ENCODE measurements at regions of chr5 and their contacts with region 1.

Region 1: DNA sequence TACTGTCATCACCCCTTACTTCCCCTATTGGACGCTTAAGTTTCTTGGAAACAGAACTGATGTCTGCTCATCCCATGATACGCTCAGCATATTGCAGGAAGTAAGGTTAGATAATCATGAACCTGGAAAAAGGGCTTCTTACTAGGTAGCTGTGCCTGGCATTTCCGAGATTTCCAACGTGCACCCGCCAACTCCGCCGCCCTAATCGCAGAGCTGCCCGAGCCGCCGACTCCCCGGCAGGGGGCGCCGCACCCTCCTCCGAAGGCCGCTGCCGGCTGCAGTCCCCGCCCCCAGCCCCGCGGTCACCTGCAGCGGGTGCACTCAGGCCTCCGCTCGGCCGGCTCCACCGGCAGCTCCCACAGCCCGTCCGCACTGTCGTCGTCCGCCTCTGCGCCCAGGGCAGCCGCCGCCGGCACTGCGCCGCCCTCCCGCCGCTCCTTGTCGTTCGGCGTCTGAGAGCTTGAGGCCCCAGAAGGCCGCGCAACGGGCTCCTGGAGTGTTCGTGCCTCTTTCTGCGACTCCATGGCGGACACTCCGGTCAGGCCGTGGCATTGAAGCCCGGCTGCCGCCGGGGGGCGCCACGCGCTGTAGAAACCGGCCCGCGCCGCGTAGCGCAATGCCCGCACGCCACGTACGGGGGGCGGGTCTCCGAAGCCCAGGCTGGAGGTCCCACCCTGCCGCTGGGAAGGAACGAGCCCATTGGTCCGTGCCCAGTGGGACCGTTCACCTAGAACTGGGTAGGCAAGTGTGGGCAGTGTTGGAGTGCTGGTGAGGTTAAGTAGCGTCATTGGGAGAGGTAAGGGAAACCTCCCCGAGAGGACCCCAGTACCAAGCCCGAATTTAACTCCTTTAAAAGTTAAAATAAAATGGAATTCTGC is at the start of gene DTWD2:
- DNase-seq: peak; percentile 92 to 96
- ATAC-seq: peak; percentile 90 to 97 (median 91)
- H3K4me3 ChIP-seq: peak within 1 kb of the TSS; percentile 43
- H3K4me3 Mint-ChIP-seq: peak within 1 kb of the TSS; percentile 82
- H3K27ac ChIP-seq: peak within 1 kb of the TSS; percentile 70
- H3K27ac Mint-ChIP-seq: peak within 1 kb of the TSS; percentile 48 to 82
- H3K4me1 ChIP-seq: peaks cover 5% of the 10 kb centered on the region
- H3K4me1 Mint-ChIP-seq: peaks cover 11 to 16% of the 10 kb centered on the region in 2 donors
- H3K27me3 ChIP-seq: no peaks in the 10 kb centered on the region
- H3K27me3 Mint-ChIP-seq: no peaks in the 10 kb centered on the region
- CTCF ChIP-seq: peak; percentile 99
- total RNA-seq, gene DTWD2: 3.7 to 6.0 (median 4.1) TPM

Region 2: GRCh38 chr5:118253225-118254061 is 734.8 kb before region 1 on chr5:
- intact Hi-C with region 1: no loop called
- DNase-seq: no peak
- ATAC-seq: no peak
- H3K4me3 ChIP-seq: no peak overlapping the region
- H3K4me3 Mint-ChIP-seq: no peak overlapping the region
- H3K27ac ChIP-seq: no peak overlapping the region
- H3K27ac Mint-ChIP-seq: no peak overlapping the region
- H3K4me1 ChIP-seq: no peaks in the 10 kb centered on the region
- H3K4me1 Mint-ChIP-seq: no peaks in the 10 kb centered on the region
- H3K27me3 ChIP-seq: no peaks in the 10 kb centered on the region
- H3K27me3 Mint-ChIP-seq: no peaks in the 10 kb centered on the region
- CTCF ChIP-seq: no peak

Region 3: GRCh38 chr5:118968925-118969375 is 19.3 kb before region 1 on chr5:
- intact Hi-C with region 1: no loop called
- DNase-seq: no peak
- ATAC-seq: no peak
- H3K4me3 ChIP-seq: no peak overlapping the region
- H3K4me3 Mint-ChIP-seq: no peak overlapping the region
- H3K27ac ChIP-seq: no peak overlapping the region
- H3K27ac Mint-ChIP-seq: no peak overlapping the region
- H3K4me1 ChIP-seq: peaks cover 3% of the 10 kb centered on the region
- H3K4me1 Mint-ChIP-seq: peaks cover 0 to 5% of the 10 kb centered on the region in 2 donors
- H3K27me3 ChIP-seq: no peaks in the 10 kb centered on the region
- H3K27me3 Mint-ChIP-seq: no peaks in the 10 kb centered on the region
- CTCF ChIP-seq: no peak

Region 4: DNA sequence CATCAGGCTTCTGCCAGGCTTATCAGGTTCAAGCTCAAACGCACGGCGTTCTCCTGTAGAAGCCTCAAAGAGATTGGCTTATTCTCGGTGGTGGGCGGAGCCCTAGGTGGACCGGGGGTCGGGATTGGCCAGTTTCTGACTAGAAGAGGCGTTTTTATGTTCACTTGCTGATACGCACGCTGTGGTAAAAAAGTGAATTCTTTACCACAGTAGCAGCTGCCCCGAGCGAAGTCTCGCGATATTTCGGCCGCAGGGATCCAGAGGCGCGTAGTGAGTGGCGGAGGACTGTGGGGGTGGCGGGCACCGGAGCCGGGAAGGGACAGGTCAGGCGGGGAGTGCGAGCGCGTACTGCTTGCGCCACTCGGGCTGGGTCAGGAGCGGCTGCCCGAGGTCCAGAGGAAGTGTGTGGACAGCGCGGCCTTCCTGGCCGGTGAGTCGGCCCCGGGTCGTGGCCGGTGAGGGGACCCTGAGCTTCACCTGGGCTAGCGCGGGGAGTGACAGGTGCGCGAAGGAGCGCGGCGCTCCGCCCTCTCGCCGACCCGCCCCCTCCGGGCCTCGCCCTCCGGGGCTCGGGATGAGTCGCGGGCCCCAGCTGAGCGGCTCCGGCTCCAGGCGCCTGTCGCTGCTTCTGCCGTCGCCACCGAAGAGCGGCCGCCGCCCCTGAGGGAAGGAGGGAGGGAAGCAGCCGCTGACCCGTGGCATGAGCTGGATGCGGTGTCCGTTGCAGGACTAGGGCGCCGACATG is 82.8 kb after region 1 on chr5 and contains the start of gene DMXL1:
- intact Hi-C with region 1: loop called (anchors 1 kb)
- DNase-seq: peak; percentile 96 to 99
- ATAC-seq: peak; percentile 87 to 96 (median 89)
- H3K4me3 ChIP-seq: peak within 1 kb of the TSS; percentile 79
- H3K4me3 Mint-ChIP-seq: peak within 1 kb of the TSS; percentile 100
- H3K27ac ChIP-seq: peak within 1 kb of the TSS; percentile 93
- H3K27ac Mint-ChIP-seq: peak within 1 kb of the TSS; percentile 98 to 100
- H3K4me1 ChIP-seq: peaks cover 19% of the 10 kb centered on the region
- H3K4me1 Mint-ChIP-seq: peaks cover 39 to 41% of the 10 kb centered on the region in 2 donors
- H3K27me3 ChIP-seq: no peaks in the 10 kb centered on the region
- H3K27me3 Mint-ChIP-seq: no peaks in the 10 kb centered on the region
- CTCF ChIP-seq: no peak
- total RNA-seq, gene DMXL1: 36.7 to 43.0 (median 39.9) TPM

Region 5: DNA sequence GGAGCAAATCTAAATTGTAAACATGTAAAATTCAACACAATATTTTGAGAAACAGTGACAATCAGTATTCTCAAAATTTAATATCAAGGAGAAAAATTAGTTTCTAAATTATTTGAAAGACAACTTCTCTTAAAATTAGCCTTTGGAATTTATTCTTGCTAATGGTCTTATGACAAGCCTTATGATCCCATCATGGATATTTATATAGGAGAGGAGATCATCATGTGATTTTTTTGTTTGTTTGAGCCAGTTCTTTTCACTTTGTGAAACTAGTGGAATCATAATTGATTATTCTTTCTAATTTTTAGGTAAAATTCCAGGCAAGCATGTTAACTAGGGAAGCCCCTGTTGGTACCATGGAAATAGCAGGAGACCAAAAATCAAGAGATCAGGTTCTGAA is 107.4 kb after region 1 on chr5:
- intact Hi-C with region 1: no loop called
- DNase-seq: no peak
- ATAC-seq: no peak
- H3K4me3 ChIP-seq: no peak overlapping the region
- H3K4me3 Mint-ChIP-seq: no peak overlapping the region
- H3K27ac ChIP-seq: no peak overlapping the region
- H3K27ac Mint-ChIP-seq: no peak overlapping the region
- H3K4me1 ChIP-seq: no peaks in the 10 kb centered on the region
- H3K4me1 Mint-ChIP-seq: peaks cover 40 to 41% of the 10 kb centered on the region in 2 donors
- H3K27me3 ChIP-seq: no peaks in the 10 kb centered on the region
- H3K27me3 Mint-ChIP-seq: no peaks in the 10 kb centered on the region
- CTCF ChIP-seq: no peak

Region 6: GRCh38 chr5:119255571-119256356 is 267.5 kb after region 1 on chr5:
- intact Hi-C with region 1: loop called (anchors 1 kb)
- DNase-seq: peak in 1 of 2 donors; percentile 39
- ATAC-seq: peak in 2 of 3 donors; percentile 76 to 79
- H3K4me3 ChIP-seq: no peak overlapping the region
- H3K4me3 Mint-ChIP-seq: no peak overlapping the region
- H3K27ac ChIP-seq: no peak overlapping the region
- H3K27ac Mint-ChIP-seq: no peak overlapping the region
- H3K4me1 ChIP-seq: no peaks in the 10 kb centered on the region
- H3K4me1 Mint-ChIP-seq: peaks cover 0 to 5% of the 10 kb centered on the region in 2 donors
- H3K27me3 ChIP-seq: no peaks in the 10 kb centered on the region
- H3K27me3 Mint-ChIP-seq: peaks cover 0 to 4% of the 10 kb centered on the region in 2 donors
- CTCF ChIP-seq: no peak

Region 7: GRCh38 chr5:119411935-119412602 is 423.8 kb after region 1 on chr5:
- intact Hi-C with region 1: loop called (anchors 1 kb)
- DNase-seq: peak; percentile 21 to 88
- ATAC-seq: peak; percentile 84 to 98 (median 96)
- H3K4me3 ChIP-seq: peak overlapping the region; percentile 38
- H3K4me3 Mint-ChIP-seq: peak overlapping the region; percentile 94
- H3K27ac ChIP-seq: no peak overlapping the region
- H3K27ac Mint-ChIP-seq: peak overlapping the region in 1 of 2 donors; percentile 85
- H3K4me1 ChIP-seq: peaks cover 8% of the 10 kb centered on the region
- H3K4me1 Mint-ChIP-seq: peaks cover 9 to 10% of the 10 kb centered on the region in 2 donors
- H3K27me3 ChIP-seq: no peaks in the 10 kb centered on the region
- H3K27me3 Mint-ChIP-seq: peaks cover 0 to 4% of the 10 kb centered on the region in 2 donors
- CTCF ChIP-seq: peak; percentile 94

Region 8: DNA sequence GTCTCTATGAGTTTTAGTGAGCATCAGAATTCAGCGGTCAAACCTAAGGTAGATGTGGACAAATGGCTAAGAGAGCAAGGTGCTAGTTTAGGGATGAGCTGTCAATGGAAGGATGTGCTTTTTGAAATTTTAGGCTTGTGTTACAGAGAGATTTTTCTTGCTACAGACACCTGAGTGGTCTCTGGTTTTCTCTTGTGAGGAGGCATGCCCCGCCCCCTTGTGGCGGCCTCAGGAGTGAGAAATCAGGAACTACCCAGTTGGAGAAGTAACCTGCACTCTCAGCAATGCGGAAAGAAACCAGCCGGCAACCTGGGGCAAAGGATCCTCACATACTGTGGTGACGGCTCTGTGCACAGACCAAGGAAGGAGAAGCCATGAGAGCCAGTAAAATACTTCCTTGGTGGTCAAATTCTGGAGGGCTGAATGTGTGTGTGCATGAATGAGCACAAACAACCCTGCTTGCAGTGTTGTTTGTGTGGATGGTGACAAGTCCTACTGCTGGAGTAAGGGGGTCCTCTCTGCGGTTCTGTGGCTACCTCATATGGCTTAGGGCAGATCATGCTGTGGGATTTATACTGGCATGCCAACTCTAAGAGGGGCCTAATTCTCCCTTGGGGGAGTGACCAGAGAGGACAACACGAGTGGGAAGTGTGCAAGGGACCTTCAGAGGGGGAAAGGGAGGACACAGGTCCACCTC is 447.4 kb after region 1 on chr5:
- intact Hi-C with region 1: loop called (anchors 1 kb)
- DNase-seq: peak; percentile 29 to 81
- ATAC-seq: peak; percentile 57 to 76 (median 65)
- H3K4me3 ChIP-seq: no peak overlapping the region
- H3K4me3 Mint-ChIP-seq: no peak overlapping the region
- H3K27ac ChIP-seq: no peak overlapping the region
- H3K27ac Mint-ChIP-seq: no peak overlapping the region
- H3K4me1 ChIP-seq: peaks cover 4% of the 10 kb centered on the region
- H3K4me1 Mint-ChIP-seq: peaks cover 5 to 15% of the 10 kb centered on the region in 2 donors
- H3K27me3 ChIP-seq: no peaks in the 10 kb centered on the region
- H3K27me3 Mint-ChIP-seq: peaks cover 24 to 26% of the 10 kb centered on the region in 2 donors
- CTCF ChIP-seq: peak; percentile 45